ENCODE measurements at regions of chr10 and their contacts with region 1.

Region 1: DNA sequence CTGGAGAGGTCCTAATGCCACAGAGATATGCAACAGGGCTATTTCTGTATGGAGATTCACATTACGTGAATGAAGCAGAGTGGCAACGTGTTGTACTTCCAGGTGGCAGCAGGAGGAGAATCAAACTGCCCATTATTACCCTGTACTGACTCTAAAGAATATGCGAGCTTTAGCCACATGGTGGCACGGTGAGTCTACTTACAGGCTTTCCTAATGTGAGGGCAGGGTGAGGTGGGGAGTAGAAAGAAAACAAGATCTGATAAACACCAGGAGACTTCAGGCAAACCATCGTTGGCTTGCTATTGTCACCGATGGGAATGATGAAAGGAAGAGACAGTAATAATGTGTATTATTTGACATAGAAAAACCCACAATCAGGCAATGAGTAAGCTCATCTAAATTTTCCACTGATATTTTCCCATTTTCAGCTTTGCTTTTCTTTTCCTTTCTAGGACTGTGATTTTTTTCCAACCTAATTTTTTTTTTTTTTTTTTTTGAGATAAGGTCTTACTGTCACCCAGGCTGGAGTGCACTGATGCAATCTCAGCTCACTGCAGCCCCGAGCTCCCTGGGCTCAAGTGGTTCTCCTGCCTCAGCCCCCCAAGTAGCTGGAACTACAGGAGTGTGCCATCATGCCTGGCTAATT is 164.3 kb downstream of the BTAF1 start:
- DNase-seq: peak in 40 of 42 donors; percentile 33 to 86 (median 68)

Region 2: DNA sequence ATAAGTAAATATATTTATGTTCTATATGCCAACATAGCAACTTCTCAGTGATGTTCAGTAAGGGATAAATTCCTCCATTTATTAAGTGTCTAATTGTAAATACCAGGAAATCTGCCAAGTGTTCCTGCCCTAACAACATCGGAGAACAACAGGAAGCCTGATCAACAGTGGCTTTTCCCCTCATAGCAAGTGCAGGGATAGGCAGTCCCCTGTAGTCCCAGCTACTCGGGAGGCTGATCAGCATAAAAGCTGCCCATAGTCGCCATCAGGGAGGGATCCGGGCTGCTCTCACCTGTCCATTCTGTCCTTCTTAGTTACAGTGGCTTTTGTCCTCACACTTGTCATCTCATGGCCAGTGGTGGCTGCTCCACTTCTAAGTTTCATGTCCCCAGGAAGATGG is 344.7 kb after region 1 on chr10:
- intact Hi-C with region 1: loop called (anchors 10 kb)
- DNase-seq: no peak

Measured in head of caudate nucleus (tissue), 42 donors.